Left ventricle myocardium inferior (tissue), 1 donor: ENCODE measurements at regions of chr11 and their contacts with region 1.

Region 1: DNA sequence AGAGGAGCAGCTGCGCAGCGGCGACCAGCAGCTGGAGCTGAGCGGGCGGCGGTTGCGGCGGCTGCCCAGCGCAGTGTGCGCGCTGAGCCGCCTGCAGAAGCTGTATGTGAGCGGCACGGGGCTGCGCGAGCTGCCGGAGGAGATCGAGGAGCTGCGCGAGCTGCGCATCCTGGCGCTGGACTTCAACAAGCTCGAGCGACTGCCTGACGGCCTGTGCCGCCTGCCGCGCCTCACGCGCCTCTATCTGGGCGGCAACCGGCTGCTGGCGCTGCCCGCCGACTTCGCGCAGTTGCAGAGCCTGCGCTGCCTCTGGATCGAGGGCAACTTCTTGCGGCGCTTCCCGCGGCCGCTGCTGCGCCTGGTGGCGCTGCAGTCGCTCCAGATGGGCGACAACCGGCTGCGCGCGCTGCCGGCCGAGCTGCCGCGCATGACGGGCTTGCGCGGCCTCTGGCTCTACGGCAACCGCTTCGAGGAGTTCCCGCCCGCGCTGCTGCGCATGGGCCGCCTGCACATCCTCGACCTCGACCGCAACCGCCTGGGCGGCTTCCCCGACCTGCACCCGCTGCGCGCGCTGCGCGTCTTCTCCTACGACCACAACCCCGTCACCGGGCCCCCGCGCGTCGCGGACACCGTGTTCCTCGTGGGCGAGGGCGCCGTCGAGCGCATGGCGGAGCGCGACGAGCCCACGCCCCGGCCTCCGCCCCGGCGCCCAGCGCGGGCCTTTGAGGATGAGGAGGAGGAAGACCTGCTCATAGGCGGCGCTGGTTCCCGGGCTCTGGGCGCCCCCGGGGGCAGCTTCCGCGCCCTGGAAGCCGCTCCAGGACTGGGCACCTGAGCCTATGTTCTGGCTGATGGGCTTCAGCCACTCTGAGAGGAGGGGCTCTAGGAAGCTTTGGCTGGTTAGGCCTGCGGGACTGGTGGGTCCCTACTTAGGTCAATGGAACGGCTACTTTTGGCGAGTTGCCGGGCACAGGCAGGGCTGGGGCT is 787 bp downstream of the LRRC10B start:
- DNase-seq: peak; percentile 62
- H3K4me3 ChIP-seq: peak overlapping the region; percentile 58
- H3K27ac ChIP-seq: peak overlapping the region; percentile 68
- H3K4me1 ChIP-seq: peaks cover 26% of the 10 kb centered on the region
- H3K27me3 ChIP-seq: peaks cover 87% of the 10 kb centered on the region
- CTCF ChIP-seq: peak; percentile 70

Region 2: DNA sequence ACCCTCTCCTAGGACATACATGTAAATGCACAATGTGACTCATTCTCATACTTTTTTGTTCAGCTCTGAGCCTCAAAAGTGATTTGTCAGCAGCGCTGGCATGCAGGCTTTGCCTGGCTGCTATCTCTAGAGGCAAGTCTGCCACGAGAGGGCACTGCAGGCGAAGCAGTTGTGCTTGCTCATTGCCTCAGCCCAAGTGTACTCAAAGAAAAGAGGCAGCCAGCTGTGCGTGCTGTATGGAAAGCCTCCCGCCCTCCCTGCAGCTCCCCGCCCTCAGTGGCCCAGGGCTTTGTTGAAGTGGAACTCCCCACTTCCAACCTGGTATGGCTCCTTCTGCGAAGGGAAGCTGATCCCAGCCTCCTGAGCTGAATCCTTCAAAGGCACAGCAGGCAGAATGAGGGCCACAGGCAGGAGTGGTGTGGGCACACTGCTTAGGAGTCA is 63.1 kb before region 1 on chr11:
- intact Hi-C with region 1: loop called (anchors 10 kb)
- DNase-seq: peak; percentile 91
- H3K4me3 ChIP-seq: no peak overlapping the region
- H3K27ac ChIP-seq: peak overlapping the region; percentile 89
- H3K4me1 ChIP-seq: peaks cover 63% of the 10 kb centered on the region
- H3K27me3 ChIP-seq: no peaks in the 10 kb centered on the region
- CTCF ChIP-seq: peak; percentile 89